IMR-90 (cell line): ENCODE measurements at regions of chr10 and their contacts with region 1.

Region 1: GRCh38 chr10:17257466-17258321 is 29.7 kb downstream of the VIM start:
- DNase-seq: peak; percentile 78
- ATAC-seq: peak; percentile 98
- H3K4me3 ChIP-seq: peak overlapping the region; percentile 37; the same call in 1 of the 2 replicates
- H3K27ac ChIP-seq: peak overlapping the region; percentile 18; the same call in 1 of the 2 replicates
- H3K4me1 ChIP-seq: no peaks in the 10 kb centered on the region
- H3K27me3 ChIP-seq: no peaks in the 10 kb centered on the region
- CTCF ChIP-seq: peak; percentile 94
- POLR2A ChIP-seq: no peak
- RAD21 ChIP-seq: peak; percentile 97

Region 2: GRCh38 chr10:15879058-15879457 is 1378.6 kb before region 1 on chr10:
- CTCF ChIA-PET with region 1: no interaction called
- POLR2A ChIA-PET with region 1: no interaction called
- dilution Hi-C with region 1: no loop called
- in situ Hi-C with region 1: loop called (anchors 25 kb)
- intact Hi-C with region 1: no loop called
- DNase-seq: peak; percentile 40
- ATAC-seq: no peak; the same call in 1 of the 2 replicates
- H3K4me3 ChIP-seq: no peak overlapping the region
- H3K27ac ChIP-seq: no peak overlapping the region
- H3K4me1 ChIP-seq: no peaks in the 10 kb centered on the region
- H3K27me3 ChIP-seq: peaks cover 6% of the 10 kb centered on the region
- CTCF ChIP-seq: peak; percentile 66
- POLR2A ChIP-seq: no peak
- RAD21 ChIP-seq: peak; percentile 62

Region 3: DNA sequence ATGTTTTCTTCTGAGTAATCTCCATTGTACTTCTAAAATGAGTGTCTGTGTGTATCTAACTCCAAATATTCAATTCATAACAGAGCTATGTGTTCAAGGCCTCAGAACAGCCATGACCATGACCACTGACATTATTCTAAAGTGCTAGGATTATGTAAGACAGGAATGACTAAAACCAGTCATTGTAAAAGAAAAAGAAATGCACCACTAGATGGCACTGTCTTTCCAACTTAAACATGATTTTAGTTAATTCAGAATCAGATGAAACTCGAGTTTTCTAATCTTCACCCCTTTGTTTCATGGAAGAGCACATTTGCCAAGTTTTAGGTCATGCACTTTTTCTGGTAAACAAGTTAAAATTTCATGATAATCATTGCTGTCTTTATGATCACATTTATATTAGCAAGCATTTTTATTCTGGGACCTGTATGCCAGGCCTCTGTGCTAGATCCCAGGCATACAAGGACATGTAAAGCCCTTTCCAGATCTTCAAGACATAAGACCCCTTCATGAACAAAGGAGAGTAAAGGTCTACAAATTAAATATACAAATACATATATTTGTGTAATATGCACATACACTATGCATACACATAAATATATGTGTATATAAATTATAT is 414.3 kb before region 1 on chr10:
- CTCF ChIA-PET with region 1: interaction called, 7 read pairs
- POLR2A ChIA-PET with region 1: interaction called, 3 read pairs
- dilution Hi-C with region 1: no loop called
- in situ Hi-C with region 1: loop called (anchors 5 kb)
- intact Hi-C with region 1: loop called (anchors 1 kb)
- DNase-seq: peak; percentile 82
- ATAC-seq: peak; percentile 85
- H3K4me3 ChIP-seq: no peak overlapping the region
- H3K27ac ChIP-seq: no peak overlapping the region
- H3K4me1 ChIP-seq: peaks cover 6% of the 10 kb centered on the region; the same call in 1 of the 2 replicates
- H3K27me3 ChIP-seq: no peaks in the 10 kb centered on the region
- CTCF ChIP-seq: peak; percentile 71
- POLR2A ChIP-seq: no peak
- RAD21 ChIP-seq: peak; percentile 77

Region 4: DNA sequence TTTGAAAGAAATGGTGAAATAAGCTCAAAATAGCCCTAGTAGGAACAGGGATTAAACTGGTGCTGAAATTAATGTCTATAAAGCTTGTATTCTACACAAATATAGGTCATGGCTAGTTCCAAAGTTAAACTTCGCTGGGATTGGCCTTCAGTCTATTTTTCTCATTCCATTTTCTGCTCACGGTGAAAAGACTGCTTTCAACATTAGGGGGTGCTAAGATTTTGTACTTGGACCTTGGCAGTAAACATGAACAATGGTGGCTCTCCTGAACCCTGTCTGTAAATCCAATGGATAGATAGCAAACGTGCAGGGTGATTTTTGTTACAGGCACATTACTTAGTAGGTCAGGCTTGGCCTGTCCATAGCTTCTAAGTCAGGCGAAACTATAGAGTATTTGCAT is 404.5 kb before region 1 on chr10:
- CTCF ChIA-PET with region 1: interaction called, 3 read pairs
- POLR2A ChIA-PET with region 1: no interaction called
- dilution Hi-C with region 1: no loop called
- in situ Hi-C with region 1: no loop called
- intact Hi-C with region 1: loop called (anchors 1 kb)
- DNase-seq: peak; percentile 68
- ATAC-seq: peak; percentile 80
- H3K4me3 ChIP-seq: no peak overlapping the region
- H3K27ac ChIP-seq: no peak overlapping the region
- H3K4me1 ChIP-seq: peaks cover 3% of the 10 kb centered on the region
- H3K27me3 ChIP-seq: no peaks in the 10 kb centered on the region
- CTCF ChIP-seq: peak; percentile 76
- POLR2A ChIP-seq: no peak
- RAD21 ChIP-seq: peak; percentile 82

Region 5: DNA sequence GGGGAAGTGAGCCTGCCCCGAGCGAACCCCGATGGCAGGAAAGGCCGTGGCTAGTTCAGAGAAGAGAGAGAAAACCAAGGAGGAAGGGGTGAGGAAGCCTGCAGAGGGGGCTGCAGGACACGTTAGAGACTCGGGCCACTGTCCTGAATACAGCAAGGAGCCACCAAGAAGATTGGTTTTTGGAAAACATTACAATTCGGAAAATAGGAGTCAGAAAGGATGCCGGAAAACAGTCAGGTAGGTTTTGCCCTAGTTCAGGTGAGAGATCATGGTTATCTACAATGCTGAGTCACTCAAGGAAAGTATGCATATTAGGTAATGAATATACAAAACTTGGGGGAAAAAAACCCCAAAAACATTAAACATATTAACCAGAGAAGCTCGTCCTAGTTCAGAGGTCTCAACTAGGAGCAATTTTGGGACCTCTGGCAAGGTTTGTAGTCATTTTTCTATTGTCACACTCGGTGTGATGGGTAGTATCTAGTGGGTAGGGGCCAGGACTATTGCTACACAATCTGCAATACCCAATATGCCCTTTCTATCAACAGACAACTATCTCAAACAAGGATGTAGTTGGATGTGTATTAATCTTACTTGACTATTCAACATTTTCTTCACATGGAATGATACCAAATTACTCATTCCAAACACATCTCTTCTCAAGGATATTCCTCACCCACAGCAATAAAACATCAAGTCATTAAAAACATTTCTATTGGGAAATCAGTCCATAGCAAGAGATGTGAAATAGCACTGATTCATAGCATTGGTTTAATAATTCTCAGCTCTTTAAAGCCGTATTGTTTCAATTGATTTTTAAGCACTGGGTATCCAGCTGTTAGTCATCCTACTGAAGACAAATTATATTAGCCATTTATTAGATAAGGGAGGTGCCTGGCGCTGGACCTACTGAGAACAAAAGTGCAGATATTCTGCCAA is 366.1 kb before region 1 on chr10:
- CTCF ChIA-PET with region 1: no interaction called
- POLR2A ChIA-PET with region 1: no interaction called
- dilution Hi-C with region 1: no loop called
- in situ Hi-C with region 1: no loop called
- intact Hi-C with region 1: loop called (anchors 1 kb)
- DNase-seq: peak; percentile 82
- ATAC-seq: peak; percentile 67
- H3K4me3 ChIP-seq: no peak overlapping the region
- H3K27ac ChIP-seq: no peak overlapping the region
- H3K4me1 ChIP-seq: no peaks in the 10 kb centered on the region; the same call in none of the 2 replicates
- H3K27me3 ChIP-seq: no peaks in the 10 kb centered on the region
- CTCF ChIP-seq: peak; percentile 55
- POLR2A ChIP-seq: peak; percentile 73
- RAD21 ChIP-seq: peak; percentile 68

Region 6: GRCh38 chr10:17504547-17505245 is 247.0 kb after region 1 on chr10:
- CTCF ChIA-PET with region 1: no interaction called
- POLR2A ChIA-PET with region 1: no interaction called
- dilution Hi-C with region 1: no loop called
- in situ Hi-C with region 1: no loop called
- intact Hi-C with region 1: no loop called
- DNase-seq: peak; percentile 84
- ATAC-seq: peak; percentile 90
- H3K4me3 ChIP-seq: no peak overlapping the region
- H3K27ac ChIP-seq: peak overlapping the region; percentile 58
- H3K4me1 ChIP-seq: peaks cover 7% of the 10 kb centered on the region
- H3K27me3 ChIP-seq: no peaks in the 10 kb centered on the region
- CTCF ChIP-seq: no peak
- POLR2A ChIP-seq: no peak
- RAD21 ChIP-seq: no peak